ENCODE measurements at regions of chr1 and their contacts with region 1.

Region 1: DNA sequence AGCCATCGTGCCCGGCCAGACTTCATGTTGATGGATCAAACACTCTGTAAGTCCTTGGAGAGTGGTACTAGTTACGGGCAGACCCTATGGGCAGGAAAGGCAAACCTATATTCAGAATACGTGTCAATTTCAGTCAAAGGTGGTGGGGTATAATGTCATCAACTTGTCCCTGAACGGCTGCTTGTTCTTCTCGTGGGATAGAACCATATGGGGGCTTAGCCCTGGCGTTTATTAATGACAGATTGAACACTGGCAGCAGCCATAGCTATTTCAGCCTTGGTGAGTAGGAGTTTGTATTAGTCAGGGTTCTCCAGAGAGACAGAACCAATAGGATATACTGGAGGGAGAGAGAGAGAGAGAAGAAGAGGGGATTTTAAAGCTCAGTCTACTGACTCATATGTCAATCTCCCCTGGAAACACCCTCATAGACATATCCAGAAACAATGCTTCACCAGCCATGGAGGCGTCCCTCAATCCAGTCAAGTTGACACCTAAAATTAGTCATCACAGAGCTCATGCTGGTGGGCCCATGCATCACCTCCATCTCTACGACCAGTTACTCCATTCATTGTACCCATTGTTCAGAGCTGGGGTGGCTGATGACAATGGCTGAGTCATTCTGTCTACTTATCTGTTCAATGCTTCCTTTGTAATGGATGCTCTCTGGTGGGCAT is 16.1 kb upstream of the AQP10 start:
- DNase-seq: peak; percentile 83
- H3K4me3 Mint-ChIP-seq: no peak overlapping the region
- H3K27ac Mint-ChIP-seq: peak overlapping the region; percentile 38
- H3K4me1 Mint-ChIP-seq: peaks cover 29% of the 10 kb centered on the region
- H3K27me3 Mint-ChIP-seq: no peaks in the 10 kb centered on the region

Region 2: GRCh38 chr1:154288661-154289060 is 16.1 kb before region 1 on chr1:
- CTCF ChIA-PET with region 1: interaction called, 3 read pairs
- POLR2A ChIA-PET with region 1: interaction called, 3 read pairs
- intact Hi-C with region 1: loop called (anchors 1 kb)
- DNase-seq: no peak
- H3K4me3 Mint-ChIP-seq: no peak overlapping the region
- H3K27ac Mint-ChIP-seq: no peak overlapping the region
- H3K4me1 Mint-ChIP-seq: peaks cover 4% of the 10 kb centered on the region
- H3K27me3 Mint-ChIP-seq: no peaks in the 10 kb centered on the region

Region 3: DNA sequence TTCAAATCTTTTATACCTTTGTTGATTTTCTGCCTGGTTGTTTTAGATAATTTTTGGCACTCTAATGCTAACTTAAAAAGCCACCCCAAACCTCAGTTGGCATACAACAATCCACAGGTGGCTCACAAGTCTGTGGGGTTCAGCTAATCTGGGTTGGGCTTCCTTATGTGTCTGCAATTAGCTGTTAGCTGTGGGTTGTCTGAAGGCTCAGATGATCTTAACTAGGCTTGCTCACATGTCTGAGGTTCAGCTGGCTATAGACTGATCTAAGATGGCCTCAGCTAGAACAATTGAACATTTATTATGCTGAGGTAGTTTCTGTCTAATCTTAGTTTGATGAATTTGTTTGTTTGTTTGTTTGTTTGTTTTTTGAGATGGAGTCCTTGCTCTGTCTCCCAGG is 348.1 kb after region 1 on chr1:
- CTCF ChIA-PET with region 1: no interaction called
- POLR2A ChIA-PET with region 1: no interaction called
- intact Hi-C with region 1: no loop called
- DNase-seq: no peak
- H3K4me3 Mint-ChIP-seq: no peak overlapping the region
- H3K27ac Mint-ChIP-seq: no peak overlapping the region
- H3K4me1 Mint-ChIP-seq: no peaks in the 10 kb centered on the region
- H3K27me3 Mint-ChIP-seq: peaks cover 8% of the 10 kb centered on the region

Measured in activated CD4-positive, alpha-beta memory T cell treated with anti-CD3 and anti-CD28 coated beads for 36 hours (primary cell).